ENCODE measurements at regions of chr20 and their contacts with region 1.

Region 1: GRCh38 chr20:9407805-9408421 is 106.5 kb upstream of the LAMP5 start:
- DNase-seq: peak; percentile 68
- H3K4me3 ChIP-seq: no peak overlapping the region
- H3K27ac ChIP-seq: peak overlapping the region; percentile 37
- H3K4me1 ChIP-seq: peaks cover 26% of the 10 kb centered on the region
- H3K27me3 ChIP-seq: no peaks in the 10 kb centered on the region

Region 2: DNA sequence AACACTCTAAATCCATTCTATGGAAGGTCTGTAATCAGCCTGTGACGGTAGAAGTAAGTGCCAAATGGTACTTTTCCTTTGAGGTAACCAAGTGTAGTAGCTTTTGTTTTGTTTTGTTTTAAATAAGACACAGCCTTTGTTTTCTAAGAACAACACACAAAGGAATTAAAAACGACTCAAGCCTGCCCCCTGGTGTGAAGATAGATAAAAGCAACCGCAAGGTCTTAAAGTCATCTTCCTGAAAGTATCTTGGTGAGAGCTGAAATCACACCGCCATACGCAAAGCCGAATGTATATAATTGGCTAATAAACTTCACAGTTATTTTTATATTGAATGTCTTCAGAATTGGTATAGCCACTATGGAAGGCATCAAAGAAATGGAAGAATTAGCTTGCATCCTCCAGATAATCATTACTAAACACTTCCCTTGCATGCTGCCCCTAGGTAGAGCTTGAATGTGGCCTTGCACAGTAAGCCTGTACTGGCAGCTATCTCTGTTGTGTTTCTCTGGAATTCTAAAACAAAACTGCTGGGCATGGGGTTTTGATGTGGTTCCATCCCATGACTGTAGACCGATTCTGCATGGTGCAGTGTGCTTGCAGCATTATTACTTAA is 202.1 kb after region 1 on chr20:
- in situ Hi-C with region 1: loop called (anchors 5 kb)
- DNase-seq: peak; percentile 65
- H3K4me3 ChIP-seq: no peak overlapping the region
- H3K27ac ChIP-seq: no peak overlapping the region
- H3K4me1 ChIP-seq: no peaks in the 10 kb centered on the region
- H3K27me3 ChIP-seq: peaks cover 66% of the 10 kb centered on the region

Region 3: DNA sequence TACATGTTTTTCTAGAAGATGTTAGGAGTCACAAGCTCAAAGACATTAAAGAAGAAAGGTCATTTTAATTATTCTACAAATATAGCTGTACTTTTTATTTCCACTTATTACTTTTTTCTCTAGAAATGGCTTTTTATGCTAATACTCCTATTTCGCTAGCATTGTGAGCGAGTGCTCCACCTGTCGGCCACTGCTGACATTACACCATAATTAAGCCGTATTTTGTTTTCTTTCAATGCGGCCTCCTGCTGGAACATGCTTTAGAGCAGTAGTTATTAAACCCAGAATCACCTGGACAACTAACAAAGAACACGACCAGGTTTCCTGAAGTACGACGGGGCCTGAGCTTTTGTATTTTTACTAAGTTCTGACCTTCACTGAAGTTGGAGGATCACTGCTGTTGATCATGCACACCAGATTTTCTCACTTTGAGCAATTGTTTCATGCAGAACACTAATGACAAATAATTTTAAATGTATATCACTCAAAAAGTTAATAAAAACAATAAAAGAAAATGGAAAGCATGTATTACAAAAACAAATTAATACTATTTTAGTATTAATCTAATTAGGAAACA is 505.0 kb after region 1 on chr20:
- in situ Hi-C with region 1: loop called (anchors 25 kb)
- DNase-seq: peak; percentile 48
- H3K4me3 ChIP-seq: no peak overlapping the region
- H3K27ac ChIP-seq: no peak overlapping the region
- H3K4me1 ChIP-seq: no peaks in the 10 kb centered on the region
- H3K27me3 ChIP-seq: peaks cover 27% of the 10 kb centered on the region

Region 4: DNA sequence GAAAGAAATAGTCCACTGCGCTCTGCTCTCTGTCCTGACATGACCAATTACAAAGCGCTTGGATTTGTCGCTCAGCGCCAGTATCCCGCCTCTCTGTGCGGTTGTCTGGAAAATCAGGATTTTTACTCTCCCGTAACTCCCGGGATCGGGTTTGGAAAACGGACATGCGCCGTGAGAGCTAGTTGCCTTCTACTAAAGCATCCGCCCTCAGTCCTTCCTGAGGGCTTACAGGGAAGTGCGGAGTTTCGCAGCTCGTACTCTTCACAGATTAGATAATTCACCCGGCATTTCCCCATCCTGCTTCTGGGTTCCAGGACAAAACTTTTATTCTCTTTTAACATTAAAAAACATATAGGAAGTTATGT is 1026.5 kb after region 1 on chr20:
- in situ Hi-C with region 1: loop called (anchors 25 kb)
- DNase-seq: peak; percentile 99
- H3K4me3 ChIP-seq: peak overlapping the region; percentile 82
- H3K27ac ChIP-seq: peak overlapping the region; percentile 89
- H3K4me1 ChIP-seq: peaks cover 6% of the 10 kb centered on the region
- H3K27me3 ChIP-seq: no peaks in the 10 kb centered on the region